Activated CD4-positive, alpha-beta T cell treated with anti-CD3 and anti-CD28 coated beads, Interleukin-2, amount 10 ng/mL, durations not matched to agents 24 days and 14 days (primary cell): ENCODE measurements at regions of chr16 and their contacts with region 1.

Region 1: GRCh38 chr16:84599521-84600202 is 18.2 kb downstream of the COTL1 start:
- DNase-seq: peak; percentile 87
- H3K4me3 Mint-ChIP-seq: peak overlapping the region; percentile 87
- H3K27ac Mint-ChIP-seq: peak overlapping the region; percentile 99
- H3K4me1 Mint-ChIP-seq: peaks cover 79% of the 10 kb centered on the region
- H3K27me3 Mint-ChIP-seq: no peaks in the 10 kb centered on the region

Region 2: DNA sequence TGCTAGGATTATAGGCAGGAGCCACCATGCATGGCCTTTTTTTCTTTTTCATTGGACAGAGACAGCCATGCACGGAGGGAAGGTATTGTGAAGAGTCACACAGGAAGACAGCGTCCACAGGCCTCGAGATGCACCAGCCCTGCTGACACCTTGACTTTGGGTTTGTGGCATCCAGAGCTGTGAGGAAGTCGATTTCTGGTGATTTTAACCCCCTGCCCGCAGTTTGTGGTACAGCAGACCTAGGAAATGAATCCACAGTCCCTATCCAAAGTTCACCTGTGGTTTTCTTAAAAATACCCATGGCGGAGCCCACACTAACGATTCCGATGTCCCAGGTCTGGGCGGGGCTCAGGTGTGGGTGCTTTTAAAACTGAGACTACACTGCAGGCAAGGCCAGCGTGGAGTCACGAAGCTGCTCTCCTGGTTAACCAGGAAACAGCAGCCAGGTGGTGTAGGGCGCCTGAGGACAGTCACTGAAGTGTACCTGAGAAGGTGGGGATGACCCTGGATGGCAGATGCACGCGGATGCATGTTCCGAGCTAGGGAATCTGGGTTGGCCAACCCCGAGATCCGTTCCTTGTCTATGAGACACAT is 80.8 kb before region 1 on chr16:
- intact Hi-C with region 1: loop called (anchors 1 kb)
- DNase-seq: peak; percentile 93
- H3K4me3 Mint-ChIP-seq: peak overlapping the region; percentile 61
- H3K27ac Mint-ChIP-seq: peak overlapping the region; percentile 85
- H3K4me1 Mint-ChIP-seq: peaks cover 62% of the 10 kb centered on the region
- H3K27me3 Mint-ChIP-seq: no peaks in the 10 kb centered on the region